PC-9 (cell line): ENCODE measurements at regions of chr7 and their contacts with region 1.

Region 1: GRCh38 chr7:74575138-74575727 is 82.3 kb upstream of the GTF2I start:
- DNase-seq: peak; percentile 82 to 87
- H3K4me3 ChIP-seq: no peak overlapping the region
- H3K27ac ChIP-seq: peak overlapping the region; percentile 78
- H3K4me1 ChIP-seq: peaks cover 56% of the 10 kb centered on the region
- H3K27me3 ChIP-seq: no peaks in the 10 kb centered on the region
- CTCF ChIP-seq: no peak

Region 2: GRCh38 chr7:73585196-73585595 is 990.0 kb before region 1 on chr7:
- CTCF ChIA-PET with region 1: no interaction called
- POLR2A ChIA-PET with region 1: interaction called, 18 read pairs
- intact Hi-C with region 1: no loop called
- DNase-seq: no peak
- H3K4me3 ChIP-seq: no peak overlapping the region
- H3K27ac ChIP-seq: no peak overlapping the region
- H3K4me1 ChIP-seq: peaks cover 22% of the 10 kb centered on the region
- H3K27me3 ChIP-seq: no peaks in the 10 kb centered on the region
- CTCF ChIP-seq: no peak

Region 3: GRCh38 chr7:74254129-74254857 is 320.9 kb before region 1 on chr7 and contains the start of gene RFC2:
- CTCF ChIA-PET with region 1: no interaction called
- POLR2A ChIA-PET with region 1: interaction called, 10 read pairs
- intact Hi-C with region 1: no loop called
- DNase-seq: peak; percentile 88 to 99
- H3K4me3 ChIP-seq: peak within 1 kb of the TSS; percentile 92
- H3K27ac ChIP-seq: peak within 1 kb of the TSS; percentile 67
- H3K4me1 ChIP-seq: peaks cover 17% of the 10 kb centered on the region
- H3K27me3 ChIP-seq: no peaks in the 10 kb centered on the region
- CTCF ChIP-seq: no peak
- total RNA-seq, gene RFC2: 65.5 and 75.7 TPM in 2 replicates

Region 4: DNA sequence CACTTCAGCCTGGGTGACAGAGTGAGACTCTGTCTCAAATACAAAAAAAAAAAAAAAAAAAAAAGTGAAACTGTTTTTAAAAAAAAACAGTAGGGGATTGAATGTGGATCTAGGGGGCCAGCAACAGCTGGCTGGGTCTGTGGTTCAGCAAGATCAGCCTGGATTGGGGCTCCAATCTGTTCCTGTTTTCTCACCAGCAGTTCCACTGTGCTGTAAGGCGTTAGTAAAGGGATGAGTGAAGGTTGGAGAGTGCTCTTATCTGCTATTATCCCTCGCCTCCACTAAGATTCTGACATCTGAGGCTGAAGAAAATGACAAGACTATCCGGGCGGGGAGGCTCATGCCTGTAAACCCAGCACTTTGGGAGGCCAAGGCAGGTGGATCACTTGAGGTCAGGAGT is 163.2 kb before region 1 on chr7:
- CTCF ChIA-PET with region 1: interaction called, 15 read pairs
- POLR2A ChIA-PET with region 1: no interaction called
- intact Hi-C with region 1: no loop called
- DNase-seq: no peak
- H3K4me3 ChIP-seq: no peak overlapping the region
- H3K27ac ChIP-seq: no peak overlapping the region
- H3K4me1 ChIP-seq: no peaks in the 10 kb centered on the region
- H3K27me3 ChIP-seq: no peaks in the 10 kb centered on the region
- CTCF ChIP-seq: no peak

Region 5: DNA sequence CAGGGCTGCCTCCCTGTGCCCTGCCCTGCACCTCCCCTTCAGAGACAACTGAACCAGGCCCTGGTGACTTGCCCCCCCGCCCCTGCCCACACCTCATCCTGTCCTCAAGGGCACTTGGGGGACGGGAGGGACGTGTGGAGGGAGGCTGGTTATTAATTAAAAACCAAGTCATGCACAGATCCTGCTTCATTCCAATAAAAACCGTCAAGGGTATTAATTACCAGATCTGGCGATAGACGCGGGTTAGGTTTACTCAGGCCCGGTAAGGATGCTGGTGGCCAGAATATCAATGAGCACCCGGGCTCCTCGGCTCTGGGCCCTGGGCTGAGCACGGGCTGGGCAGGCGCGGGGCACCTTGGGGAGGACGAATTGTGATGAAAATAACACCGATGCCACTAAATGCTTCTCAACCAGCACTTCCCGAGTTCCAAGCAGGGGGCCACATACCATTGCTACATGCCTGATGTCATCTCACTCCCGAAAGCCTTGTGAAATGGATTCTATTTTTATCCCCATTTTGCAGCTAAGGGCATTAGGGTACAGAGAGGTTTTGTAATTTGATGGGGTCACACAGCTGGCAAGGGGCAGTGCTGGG is 146.0 kb before region 1 on chr7:
- CTCF ChIA-PET with region 1: no interaction called
- POLR2A ChIA-PET with region 1: no interaction called
- intact Hi-C with region 1: no loop called
- DNase-seq: no peak
- H3K4me3 ChIP-seq: no peak overlapping the region
- H3K27ac ChIP-seq: no peak overlapping the region
- H3K4me1 ChIP-seq: no peaks in the 10 kb centered on the region
- H3K27me3 ChIP-seq: no peaks in the 10 kb centered on the region
- CTCF ChIP-seq: no peak

Region 6: DNA sequence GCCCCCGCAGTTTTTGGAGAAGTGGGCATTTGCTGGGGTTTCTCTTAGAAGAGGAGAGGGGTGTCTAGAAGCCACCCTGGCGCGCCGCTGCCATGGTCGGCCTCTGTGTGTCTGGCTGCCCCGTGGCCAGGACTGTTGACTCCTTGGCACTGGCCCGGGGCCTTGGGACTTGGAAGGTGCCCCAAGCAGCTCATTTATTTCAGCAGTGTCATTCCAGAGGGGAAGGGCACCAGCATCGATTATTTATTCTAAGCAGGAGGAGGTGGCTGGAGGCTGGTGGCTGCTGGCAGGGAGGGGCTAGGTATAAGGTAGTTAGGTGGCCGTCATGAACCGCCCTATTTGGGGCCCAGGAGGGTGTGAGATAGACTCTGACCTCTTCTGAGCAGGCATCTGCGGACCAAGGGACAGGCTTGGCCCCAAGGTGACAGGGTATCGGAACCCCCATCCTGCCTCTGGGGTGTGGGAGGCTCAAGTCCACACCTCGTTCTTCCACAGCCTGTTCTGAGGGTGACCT is 119.9 kb before region 1 on chr7:
- CTCF ChIA-PET with region 1: no interaction called
- POLR2A ChIA-PET with region 1: no interaction called
- intact Hi-C with region 1: no loop called
- DNase-seq: no peak
- H3K4me3 ChIP-seq: peak overlapping the region; percentile 59; the same call in 1 of the 2 replicates
- H3K27ac ChIP-seq: no peak overlapping the region
- H3K4me1 ChIP-seq: peaks cover 7% of the 10 kb centered on the region
- H3K27me3 ChIP-seq: no peaks in the 10 kb centered on the region
- CTCF ChIP-seq: no peak